GM10248 (cell line): ENCODE measurements at regions of chr2 and their contacts with region 1.

Region 1: DNA sequence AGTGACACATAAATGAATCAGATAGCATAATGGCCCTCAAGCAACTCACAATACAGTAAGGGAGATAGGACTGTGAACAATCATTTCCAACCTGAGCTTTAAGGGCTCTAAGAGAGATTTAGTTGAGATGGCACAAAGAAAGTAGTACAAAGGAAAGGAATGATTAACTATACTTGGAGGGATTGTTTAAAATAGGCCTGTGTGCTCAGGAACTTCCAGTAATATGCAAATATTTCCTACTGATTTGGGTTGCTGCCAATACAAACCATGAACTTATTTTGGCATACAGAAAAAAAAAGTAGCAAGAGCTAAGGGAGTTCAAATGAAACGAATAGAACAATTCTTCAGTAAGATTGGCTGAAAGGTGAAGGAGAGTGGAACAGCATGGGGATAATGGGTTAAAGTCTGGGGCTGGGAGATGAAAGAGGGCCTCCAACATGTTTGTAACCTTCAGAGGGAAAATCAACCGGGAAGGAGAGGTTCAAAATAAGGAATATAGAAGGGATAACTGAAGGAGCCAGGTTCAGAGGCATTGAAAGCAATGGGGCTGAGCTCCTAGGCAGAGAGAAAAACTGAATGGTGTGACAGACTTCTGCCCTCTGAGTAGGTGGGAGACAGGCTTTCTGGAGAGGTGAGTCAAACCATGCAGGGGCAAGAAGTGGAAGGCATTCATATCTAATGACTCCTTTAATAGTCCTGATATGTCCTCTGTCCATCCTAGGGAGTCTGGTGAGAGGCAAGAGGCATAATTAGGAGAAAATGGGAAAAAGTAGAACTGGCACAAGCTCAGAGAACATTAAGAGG is 83.5 kb downstream of the DNAH7 start:
- DNase-seq: no peak
- CTCF ChIP-seq: no peak

Region 2: GRCh38 chr2:195967336-195967735 is 17.8 kb before region 1 on chr2:
- CTCF ChIA-PET with region 1: interaction called, 14 read pairs
- POLR2A ChIA-PET with region 1: no interaction called
- DNase-seq: no peak
- CTCF ChIP-seq: no peak